ENCODE measurements at regions of chr18 and their contacts with region 1.

Region 1: GRCh38 chr18:58043491-58044379 is at the start of gene NEDD4L:
- DNase-seq: peak; percentile 36 to 91
- H3K4me3 ChIP-seq: peak within 1 kb of the TSS; percentile 87 to 97
- H3K27ac ChIP-seq: peak within 1 kb of the TSS; percentile 29 to 48
- H3K4me1 ChIP-seq: peaks cover 0 to 10% of the 10 kb centered on the region in 2 donors
- H3K27me3 ChIP-seq: no peaks in the 10 kb centered on the region
- CTCF ChIP-seq: peak; percentile 73 to 95 (median 94)
- total RNA-seq, gene NEDD4L: 15.6 TPM

Region 2: GRCh38 chr18:57621246-57621604 is 422.5 kb before region 1 on chr18:
- intact Hi-C with region 1: loop called (anchors 5 kb)
- DNase-seq: peak in 1 of 2 donors; percentile 65
- H3K4me3 ChIP-seq: peak overlapping the region; percentile 92 to 98
- H3K27ac ChIP-seq: peak overlapping the region; percentile 86 to 91
- H3K4me1 ChIP-seq: peaks cover 0 to 7% of the 10 kb centered on the region in 2 donors
- H3K27me3 ChIP-seq: no peaks in the 10 kb centered on the region
- CTCF ChIP-seq: no peak

Region 3: GRCh38 chr18:57803103-57803969 is 240.4 kb before region 1 on chr18 and contains the start of gene ATP8B1:
- intact Hi-C with region 1: loop called (anchors 10 kb)
- DNase-seq: peak in 1 of 2 donors; percentile 92
- H3K4me3 ChIP-seq: peak within 1 kb of the TSS; percentile 99
- H3K27ac ChIP-seq: peak within 1 kb of the TSS; percentile 97
- H3K4me1 ChIP-seq: peaks cover 5 to 41% of the 10 kb centered on the region in 2 donors
- H3K27me3 ChIP-seq: no peaks in the 10 kb centered on the region
- CTCF ChIP-seq: no peak
- total RNA-seq, gene ATP8B1: 30.9 TPM

Region 4: DNA sequence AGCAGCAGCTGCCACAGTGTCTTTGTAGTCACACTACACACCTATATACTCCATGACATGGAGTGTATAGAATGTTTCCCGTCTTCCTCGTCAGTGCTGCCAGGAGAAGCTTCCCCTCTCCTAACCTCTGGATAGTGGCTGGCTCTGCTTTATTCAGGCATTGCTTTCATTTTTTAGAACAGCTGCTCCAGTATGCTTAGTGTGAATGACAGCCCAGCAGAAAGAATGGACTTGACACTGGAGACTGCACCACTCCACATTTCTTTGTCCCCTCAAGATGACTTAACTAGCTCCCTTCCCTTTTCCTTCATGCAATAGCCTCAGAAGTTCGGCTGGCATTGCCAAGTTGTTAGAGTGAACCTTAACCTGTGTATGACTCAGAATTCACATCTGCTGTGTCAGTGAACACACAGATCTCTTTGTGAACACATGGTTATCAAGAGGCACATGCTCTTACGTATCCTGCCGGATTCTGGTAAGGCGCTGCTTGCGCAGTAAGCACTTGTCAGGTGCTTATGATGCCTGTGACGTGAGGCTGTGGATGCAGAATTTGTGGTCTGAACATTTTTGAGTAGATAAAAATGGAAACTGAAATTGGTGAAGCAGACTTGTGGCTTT is 74.2 kb after region 1 on chr18:
- intact Hi-C with region 1: loop called (anchors 1 kb)
- DNase-seq: no peak
- H3K4me3 ChIP-seq: no peak overlapping the region
- H3K27ac ChIP-seq: no peak overlapping the region
- H3K4me1 ChIP-seq: no peaks in the 10 kb centered on the region
- H3K27me3 ChIP-seq: no peaks in the 10 kb centered on the region
- CTCF ChIP-seq: no peak

Region 5: DNA sequence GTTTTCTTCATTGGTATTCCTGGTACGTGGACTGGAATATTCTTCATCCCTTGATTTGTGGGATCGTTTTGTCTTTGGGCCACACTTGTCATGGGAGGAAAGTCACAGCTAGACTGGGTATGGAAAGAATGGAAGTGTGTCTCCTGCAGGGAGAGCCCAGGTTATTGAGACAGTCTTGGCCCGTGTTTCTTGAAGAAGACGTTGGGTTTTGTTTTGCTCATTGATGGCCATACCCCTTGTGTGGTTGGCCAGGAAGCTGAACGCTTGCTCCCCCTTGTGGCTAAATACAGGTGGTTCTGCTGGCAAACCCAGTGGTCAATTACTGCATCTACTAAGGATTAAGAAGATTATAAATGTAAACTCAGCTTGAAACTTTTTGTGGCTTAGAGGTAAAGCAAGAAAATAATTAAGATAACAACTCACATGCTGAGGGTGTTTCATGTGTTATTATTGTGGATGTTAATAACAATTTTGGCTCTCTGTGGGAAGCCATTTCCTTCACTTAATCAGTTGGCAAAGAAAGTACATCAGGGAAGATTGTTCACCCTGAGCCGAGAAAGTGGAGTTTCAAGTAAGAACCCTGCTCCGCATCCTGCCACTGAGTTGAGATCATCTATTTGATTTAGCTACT is 92.1 kb after region 1 on chr18:
- intact Hi-C with region 1: loop called (anchors 5 kb)
- DNase-seq: peak in 1 of 2 donors; percentile 68
- H3K4me3 ChIP-seq: no peak overlapping the region
- H3K27ac ChIP-seq: no peak overlapping the region
- H3K4me1 ChIP-seq: no peaks in the 10 kb centered on the region
- H3K27me3 ChIP-seq: no peaks in the 10 kb centered on the region
- CTCF ChIP-seq: peak; percentile 47 to 72 (median 65)

Region 6: DNA sequence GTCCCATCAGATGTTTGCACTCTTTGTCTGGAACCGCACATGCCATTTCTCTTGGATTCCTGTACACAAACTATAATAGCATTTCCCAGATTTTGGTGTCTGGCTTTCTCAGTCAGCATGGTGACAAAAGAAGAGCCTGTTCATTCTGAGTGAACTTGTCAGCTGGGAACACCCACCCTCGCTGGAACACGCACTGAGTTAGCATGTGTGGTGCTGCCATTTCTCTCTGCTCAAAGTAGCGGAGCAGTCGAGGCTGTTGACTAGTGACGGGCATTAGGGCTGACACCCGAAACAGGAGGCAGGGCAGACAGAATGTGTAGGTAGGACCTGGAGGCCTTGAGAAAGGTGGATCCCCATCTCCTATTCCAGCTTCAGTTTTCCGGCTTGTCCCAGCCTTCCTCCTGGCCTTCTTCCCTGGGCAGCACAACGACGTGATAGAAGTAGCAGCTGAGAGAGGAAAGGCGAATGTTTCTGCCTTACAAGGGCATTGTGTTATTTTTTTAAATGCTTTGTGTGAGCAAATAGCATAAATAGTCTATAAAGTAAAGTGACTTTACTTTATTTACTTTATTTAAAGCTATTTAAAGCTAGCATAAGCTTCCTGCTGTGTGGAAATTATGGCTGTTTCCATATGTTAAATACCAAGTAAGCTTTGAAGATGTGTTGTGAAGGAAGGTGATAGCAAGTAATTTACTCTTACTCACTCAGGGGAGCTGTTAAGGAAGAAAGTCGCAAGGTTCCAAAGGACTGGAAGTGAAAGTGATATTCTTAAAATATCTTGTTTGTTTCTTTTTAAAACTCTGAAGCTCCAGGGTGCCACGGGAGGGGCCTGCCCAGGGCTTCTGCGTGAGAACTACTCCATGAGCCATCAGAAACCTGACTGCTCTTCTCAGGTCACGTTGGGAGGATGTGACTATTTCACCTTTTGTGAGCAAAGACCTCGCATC is 272.9 kb after region 1 on chr18:
- intact Hi-C with region 1: loop called (anchors 5 kb)
- DNase-seq: no peak
- H3K4me3 ChIP-seq: no peak overlapping the region
- H3K27ac ChIP-seq: no peak overlapping the region
- H3K4me1 ChIP-seq: no peaks in the 10 kb centered on the region
- H3K27me3 ChIP-seq: no peaks in the 10 kb centered on the region
- CTCF ChIP-seq: no peak

Region 7: DNA sequence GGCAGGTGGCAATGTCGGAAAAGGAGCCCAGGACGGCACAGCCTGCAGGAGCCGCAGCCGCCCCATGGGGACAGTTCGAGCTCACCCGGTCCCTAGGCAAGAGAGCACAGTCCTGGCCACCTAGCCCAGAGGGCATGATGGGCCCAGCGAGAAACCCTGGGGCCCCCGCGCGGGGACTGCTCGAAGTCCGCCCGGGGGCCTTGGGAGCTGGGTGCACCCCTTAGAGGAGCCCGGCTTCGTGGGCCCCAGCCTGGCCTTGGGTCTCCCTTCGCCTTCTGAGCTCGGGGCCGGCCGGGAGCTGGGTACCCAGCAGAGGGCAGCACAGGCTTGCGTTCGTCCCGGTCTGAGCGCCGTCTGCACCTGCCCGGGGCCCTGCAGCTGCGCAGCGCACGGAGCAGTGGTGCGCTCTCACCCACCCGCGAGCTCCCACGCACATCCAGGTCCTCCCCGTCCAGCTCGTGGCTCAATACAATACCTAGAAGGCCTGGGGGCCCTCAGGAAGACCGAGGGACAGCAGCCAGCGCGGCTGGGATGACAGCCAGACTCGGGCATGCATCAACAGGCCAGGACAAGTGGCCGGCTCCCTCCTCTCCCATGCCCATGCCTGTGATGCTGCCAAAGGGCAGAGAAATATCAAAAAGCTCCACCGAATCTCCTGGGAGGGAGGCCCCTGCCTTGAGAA is 724.7 kb after region 1 on chr18:
- intact Hi-C with region 1: loop called (anchors 10 kb)
- DNase-seq: peak in 1 of 2 donors; percentile 83
- H3K4me3 ChIP-seq: peak overlapping the region; percentile 19 to 56
- H3K27ac ChIP-seq: no peak overlapping the region
- H3K4me1 ChIP-seq: peaks cover 0 to 3% of the 10 kb centered on the region in 2 donors
- H3K27me3 ChIP-seq: no peaks in the 10 kb centered on the region
- CTCF ChIP-seq: peak; percentile 81 to 86 (median 85)

Measured in ascending aorta (tissue), 2 donors.